AG04449 (cell line): ENCODE measurements at regions of chrX and their contacts with region 1.

Region 1: GRCh38 chrX:154040307-154040756 is 20.6 kb upstream of the IRAK1 start:
- DNase-seq: peak; percentile 69
- H3K4me3 ChIP-seq: no peak overlapping the region
- CTCF ChIP-seq: no peak

Region 2: GRCh38 chrX:153921511-153922446 is 118.6 kb before region 1 on chrX:
- CTCF ChIA-PET with region 1: no interaction called
- POLR2A ChIA-PET with region 1: no interaction called
- DNase-seq: no peak
- H3K4me3 ChIP-seq: no peak overlapping the region
- CTCF ChIP-seq: no peak

Region 3: GRCh38 chrX:154051201-154051810 is 11.0 kb after region 1 on chrX:
- CTCF ChIA-PET with region 1: interaction called, 19 read pairs
- POLR2A ChIA-PET with region 1: interaction called, 3 read pairs
- DNase-seq: no peak
- H3K4me3 ChIP-seq: no peak overlapping the region
- CTCF ChIP-seq: peak; percentile 57